Common myeloid progenitor, CD34-positive (primary cell): ENCODE measurements at regions of chr14 and their contacts with region 1.

Region 1: DNA sequence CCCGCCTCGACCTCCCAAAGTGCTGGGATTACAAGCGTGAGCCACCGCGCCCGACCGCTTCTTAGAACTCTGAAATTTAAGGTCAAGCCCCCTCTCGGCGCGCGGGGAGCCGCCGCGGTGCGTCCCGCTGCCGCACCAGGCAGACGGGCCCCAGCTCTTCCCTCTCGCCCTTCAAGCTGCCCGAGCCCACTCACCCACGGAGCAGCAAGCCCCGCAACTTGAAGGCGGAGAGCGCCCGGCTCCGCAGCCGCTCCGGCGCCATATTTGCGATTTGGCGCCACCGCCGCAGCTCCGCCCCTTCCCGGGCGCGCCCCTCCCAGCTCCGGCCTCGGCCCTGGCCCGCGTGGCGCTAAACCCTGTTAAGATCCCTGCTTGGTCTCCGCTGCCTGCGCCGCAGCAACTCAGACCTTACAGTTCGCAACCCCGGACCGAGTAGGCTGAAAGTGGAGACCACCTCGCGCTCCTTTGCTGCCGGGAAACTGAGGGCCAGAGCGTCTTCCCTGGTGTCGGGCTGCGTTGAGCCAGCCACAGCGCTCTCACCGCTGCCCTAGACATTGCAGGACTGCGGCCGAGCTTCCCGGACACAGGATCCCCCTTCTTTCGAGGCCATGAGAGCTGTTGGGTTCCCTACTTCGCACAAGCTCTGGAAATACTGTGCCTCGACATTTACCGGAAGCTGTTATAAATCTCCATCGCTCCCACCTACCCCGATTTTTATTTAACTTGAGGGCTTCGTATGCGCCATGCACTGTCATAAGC is at the start of gene POLE2:
- DNase-seq: peak; percentile 72 to 84 (median 79)
- H3K4me3 ChIP-seq: peak within 1 kb of the TSS; percentile 71 to 87 (median 78)
- H3K27ac ChIP-seq: peak within 1 kb of the TSS; percentile 15 to 66
- H3K4me1 ChIP-seq: peaks cover 3 to 19% (median 14%) of the 10 kb centered on the region in 4 experiments
- H3K27me3 ChIP-seq: no peaks in the 10 kb centered on the region

Region 2: DNA sequence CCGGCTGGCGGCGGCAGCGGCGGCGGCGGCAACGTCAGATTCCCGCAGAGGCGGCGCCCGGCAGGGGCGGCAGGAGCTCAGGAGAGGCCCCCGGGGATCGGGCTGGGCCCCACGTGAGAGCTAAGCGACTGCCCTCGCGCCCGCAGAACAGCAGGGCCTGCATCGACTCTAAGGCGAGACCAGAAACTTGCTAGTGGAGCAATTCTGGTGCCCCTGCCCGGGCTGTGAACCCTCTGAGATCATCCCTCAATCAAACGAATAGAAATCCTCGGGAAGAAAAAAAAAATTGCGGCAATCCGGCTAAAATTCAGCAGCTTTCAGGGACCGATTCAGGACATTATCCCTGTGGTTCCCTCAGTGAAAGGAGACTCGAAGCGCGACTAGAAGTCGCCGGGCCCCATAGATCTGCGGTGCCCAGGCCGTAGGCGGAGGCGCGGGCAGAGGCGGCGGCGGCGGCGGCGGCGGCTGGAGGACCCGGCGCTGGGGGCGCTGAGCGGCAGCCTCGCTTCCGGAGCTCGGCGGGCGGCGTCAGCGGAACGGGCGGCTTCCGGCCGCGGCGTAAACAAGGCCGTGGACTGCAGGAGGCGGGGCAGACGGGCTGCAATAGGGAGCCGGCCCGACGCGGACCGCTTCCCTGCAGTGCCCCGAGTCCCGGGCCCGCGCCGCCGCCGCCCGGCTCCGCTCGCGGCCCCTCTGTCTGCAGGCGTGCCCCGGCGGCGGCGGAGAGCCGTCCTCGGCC is 79.6 kb after region 1 on chr14 and contains the start of gene KLHDC2:
- CTCF ChIA-PET with region 1: interaction called, 6 read pairs
- POLR2A ChIA-PET with region 1: interaction called, 10 read pairs
- DNase-seq: peak; percentile 89 to 95 (median 92)
- H3K4me3 ChIP-seq: peak within 1 kb of the TSS; percentile 80 to 99 (median 93)
- H3K27ac ChIP-seq: peak within 1 kb of the TSS; percentile 93 to 96
- H3K4me1 ChIP-seq: peaks cover 9 to 32% (median 25%) of the 10 kb centered on the region in 4 experiments
- H3K27me3 ChIP-seq: no peaks in the 10 kb centered on the region